ENCODE measurements at regions of chr2 and their contacts with region 1.

Region 1: GRCh38 chr2:135709992-135710391 is 31.7 kb upstream of the UBXN4 start:
- DNase-seq: peak; percentile 54
- ATAC-seq: peak; percentile 79
- H3K4me3 Mint-ChIP-seq: no peak overlapping the region
- H3K27ac Mint-ChIP-seq: no peak overlapping the region
- H3K4me1 Mint-ChIP-seq: no peaks in the 10 kb centered on the region
- H3K27me3 Mint-ChIP-seq: no peaks in the 10 kb centered on the region
- CTCF ChIP-seq: no peak

Region 2: GRCh38 chr2:134460583-134460998 is 1249.4 kb before region 1 on chr2:
- CTCF ChIA-PET with region 1: interaction called, 3 read pairs
- POLR2A ChIA-PET with region 1: no interaction called
- intact Hi-C with region 1: loop called (anchors 10 kb)
- DNase-seq: no peak
- ATAC-seq: peak; percentile 88
- H3K4me3 Mint-ChIP-seq: no peak overlapping the region
- H3K27ac Mint-ChIP-seq: no peak overlapping the region
- H3K4me1 Mint-ChIP-seq: peaks cover 6% of the 10 kb centered on the region
- H3K27me3 Mint-ChIP-seq: no peaks in the 10 kb centered on the region
- CTCF ChIP-seq: no peak

Region 3: DNA sequence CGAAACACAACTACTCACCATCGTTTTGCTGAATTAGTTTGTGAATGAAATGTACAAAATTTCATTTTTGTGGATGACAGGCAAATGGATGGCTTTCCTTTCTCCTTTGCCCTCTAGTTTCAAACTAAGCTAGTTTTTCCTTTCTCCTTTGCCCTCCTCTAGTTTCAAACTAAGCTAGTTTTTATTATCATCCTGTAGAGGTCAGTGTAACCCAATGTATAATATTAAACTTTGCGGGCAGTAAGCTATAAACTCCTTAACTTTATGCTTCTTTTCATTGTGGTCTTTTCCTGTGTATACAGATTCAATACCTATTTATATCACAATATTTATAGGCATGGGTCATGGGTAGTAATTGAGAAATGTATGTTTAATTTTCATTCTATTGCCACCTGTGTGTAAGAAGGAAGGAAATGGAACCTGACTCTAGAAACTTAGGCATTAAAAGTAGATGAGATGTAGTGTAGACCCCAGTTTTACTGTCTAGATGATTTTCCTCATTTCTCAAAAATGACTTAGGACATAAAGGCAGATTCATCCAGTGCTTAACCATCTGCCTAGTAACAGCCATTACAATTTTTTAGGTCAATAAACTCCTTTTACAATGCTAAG is 720.9 kb before region 1 on chr2:
- CTCF ChIA-PET with region 1: interaction called, 43 read pairs
- POLR2A ChIA-PET with region 1: no interaction called
- intact Hi-C with region 1: loop called (anchors 1 kb)
- DNase-seq: no peak
- ATAC-seq: no peak
- H3K4me3 Mint-ChIP-seq: no peak overlapping the region
- H3K27ac Mint-ChIP-seq: no peak overlapping the region
- H3K4me1 Mint-ChIP-seq: peaks cover 4% of the 10 kb centered on the region
- H3K27me3 Mint-ChIP-seq: peaks cover 7% of the 10 kb centered on the region
- CTCF ChIP-seq: no peak

Region 4: GRCh38 chr2:135473567-135473966 is 236.4 kb before region 1 on chr2:
- CTCF ChIA-PET with region 1: interaction called, 44 read pairs
- POLR2A ChIA-PET with region 1: no interaction called
- intact Hi-C with region 1: loop called (anchors 1 kb)
- DNase-seq: no peak
- ATAC-seq: no peak
- H3K4me3 Mint-ChIP-seq: no peak overlapping the region
- H3K27ac Mint-ChIP-seq: no peak overlapping the region
- H3K4me1 Mint-ChIP-seq: no peaks in the 10 kb centered on the region
- H3K27me3 Mint-ChIP-seq: no peaks in the 10 kb centered on the region
- CTCF ChIP-seq: no peak

Region 5: GRCh38 chr2:136448432-136448831 is 738.4 kb after region 1 on chr2:
- CTCF ChIA-PET with region 1: no interaction called
- POLR2A ChIA-PET with region 1: no interaction called
- intact Hi-C with region 1: no loop called
- DNase-seq: no peak
- ATAC-seq: no peak
- H3K4me3 Mint-ChIP-seq: no peak overlapping the region
- H3K27ac Mint-ChIP-seq: no peak overlapping the region
- H3K4me1 Mint-ChIP-seq: no peaks in the 10 kb centered on the region
- H3K27me3 Mint-ChIP-seq: peaks cover 9% of the 10 kb centered on the region
- CTCF ChIP-seq: no peak

Measured in activated B cell treated with CpG ODN at 0.5 μM for 24 hours (primary cell).